Activated B cell treated with CpG ODN at 0.5 μM for 24 hours (primary cell): ENCODE measurements at regions of chr9 and their contacts with region 1.

Region 1: GRCh38 chr9:24793787-24794186 is 248.1 kb upstream of the IZUMO3 start:
- DNase-seq: no peak
- ATAC-seq: no peak
- H3K4me3 Mint-ChIP-seq: no peak overlapping the region
- H3K27ac Mint-ChIP-seq: no peak overlapping the region
- H3K4me1 Mint-ChIP-seq: no peaks in the 10 kb centered on the region
- H3K27me3 Mint-ChIP-seq: no peaks in the 10 kb centered on the region
- CTCF ChIP-seq: no peak

Region 2: DNA sequence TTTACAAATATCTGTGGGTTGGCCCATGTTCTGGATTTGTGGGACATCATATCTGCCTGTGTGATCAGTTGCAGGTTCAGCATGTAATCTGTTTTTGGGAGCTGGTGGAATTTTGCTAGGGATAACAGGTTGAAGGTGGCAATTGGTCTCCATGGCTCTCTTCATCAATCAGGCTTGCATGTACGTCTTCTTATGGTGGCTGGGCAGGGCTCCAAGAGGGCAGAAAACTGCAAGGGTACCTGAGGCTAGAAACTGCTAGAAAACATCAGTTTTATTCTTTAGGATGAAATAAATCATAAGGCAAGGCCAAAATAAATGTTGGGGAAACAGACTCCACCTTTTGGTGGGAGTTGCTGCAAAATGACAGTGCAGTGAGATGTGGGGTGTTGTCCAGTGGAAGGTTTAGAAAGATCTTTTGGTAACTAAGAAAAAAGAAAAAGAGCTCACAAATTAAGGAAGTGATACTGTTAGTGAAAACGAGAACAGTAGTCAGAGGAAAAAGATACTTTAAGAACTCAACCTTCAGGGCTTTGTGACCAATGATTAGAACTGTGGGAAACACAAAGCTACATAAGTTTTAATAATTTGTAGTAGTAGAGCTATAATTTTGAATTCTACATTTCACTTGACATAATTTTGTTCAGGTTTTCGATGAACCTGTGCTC is 52.6 kb after region 1 on chr9:
- CTCF ChIA-PET with region 1: no interaction called
- POLR2A ChIA-PET with region 1: no interaction called
- intact Hi-C with region 1: loop called (anchors 10 kb)
- DNase-seq: no peak
- ATAC-seq: no peak
- H3K4me3 Mint-ChIP-seq: peak overlapping the region; percentile 8
- H3K27ac Mint-ChIP-seq: no peak overlapping the region
- H3K4me1 Mint-ChIP-seq: peaks cover 8% of the 10 kb centered on the region
- H3K27me3 Mint-ChIP-seq: no peaks in the 10 kb centered on the region
- CTCF ChIP-seq: no peak